Activated T-helper 1 cell treated with anti-CD3 and anti-CD28 coated beads, Interleukin-12 subunit alpha, Interleukin-12 subunit beta, Interleukin-2, Interleukin-4 antibody, amounts not matched to agents 30 ng/mL and 10 ng/mL and 1 ng/mL, durations not matched to agents 14 hours and 24 hours and 36 hours (primary cell): ENCODE measurements at regions of chr14 and their contacts with region 1.

Region 1: DNA sequence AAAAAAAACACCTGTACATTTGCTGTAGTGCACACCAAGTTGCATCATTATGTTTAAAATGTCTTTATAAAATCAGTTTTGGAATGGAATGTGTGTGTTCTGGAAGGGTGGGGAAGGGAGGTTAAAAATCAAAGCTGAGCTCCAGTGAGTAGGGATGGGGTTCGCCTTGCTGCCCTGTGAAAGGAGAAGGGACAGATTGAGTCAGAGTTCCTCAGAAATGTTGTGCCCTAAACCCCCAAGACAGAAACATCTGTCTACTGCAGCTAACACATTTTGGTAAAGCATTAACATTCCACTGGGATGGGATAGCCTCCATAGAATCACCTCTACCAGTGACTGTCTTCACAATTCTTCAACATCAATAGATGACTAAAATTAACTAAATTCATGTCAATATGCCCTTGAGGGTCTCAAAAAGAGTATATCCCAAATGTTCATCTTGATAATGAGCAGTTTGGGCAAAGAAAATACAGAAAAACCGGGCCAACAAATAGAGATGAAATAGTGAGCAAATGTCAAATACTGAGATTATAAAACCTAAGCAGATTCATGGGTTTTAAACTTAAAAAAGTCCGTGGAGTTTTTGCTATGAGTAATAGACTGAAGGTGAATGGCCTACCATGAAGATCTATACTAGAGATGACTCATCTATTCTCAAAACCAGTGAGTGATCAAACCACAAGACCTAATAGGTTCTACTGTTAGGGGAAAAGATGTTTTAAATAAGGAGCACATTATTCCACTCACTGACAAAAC is 5.4 kb downstream of the HNRNPC start:
- DNase-seq: no peak
- H3K4me3 Mint-ChIP-seq: peak overlapping the region; percentile 99
- H3K27ac Mint-ChIP-seq: peak overlapping the region; percentile 91
- H3K4me1 Mint-ChIP-seq: peaks cover 70% of the 10 kb centered on the region
- H3K27me3 Mint-ChIP-seq: no peaks in the 10 kb centered on the region

Region 2: GRCh38 chr14:21215130-21215878 is 48.5 kb before region 1 on chr14:
- intact Hi-C with region 1: loop called (anchors 5 kb)
- DNase-seq: no peak
- H3K4me3 Mint-ChIP-seq: peak overlapping the region; percentile 49
- H3K27ac Mint-ChIP-seq: peak overlapping the region; percentile 84
- H3K4me1 Mint-ChIP-seq: peaks cover 56% of the 10 kb centered on the region
- H3K27me3 Mint-ChIP-seq: no peaks in the 10 kb centered on the region